Naive thymus-derived CD8-positive, alpha-beta T cell (primary cell): ENCODE measurements at regions of chr12 and their contacts with region 1.

Region 1: DNA sequence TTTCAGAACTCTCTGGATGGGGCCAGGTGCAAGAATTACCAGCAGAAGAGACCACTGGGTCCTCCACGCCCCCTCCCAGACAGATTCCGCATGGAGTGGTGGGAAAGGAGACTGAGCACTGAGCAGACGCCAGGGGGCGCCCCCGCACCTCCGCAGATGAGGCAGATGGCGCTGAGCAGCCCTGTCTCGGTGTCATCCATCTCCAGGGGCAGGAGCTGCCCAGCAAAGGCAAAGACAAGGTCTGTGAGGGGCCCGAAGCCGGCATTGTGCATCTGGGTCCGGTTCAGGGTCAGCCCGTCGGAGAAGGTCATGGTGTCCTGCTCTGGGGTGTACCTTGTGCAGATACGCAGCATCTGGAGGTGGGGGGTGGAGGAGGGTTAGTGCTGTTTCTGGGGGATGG is 6.3 kb upstream of the ITGB7 start:
- DNase-seq: peak; percentile 69 to 90 (median 83)
- ATAC-seq: peak; percentile 72 to 73
- H3K4me3 Mint-ChIP-seq: peak overlapping the region in 2 of 10 donors; percentile 10 to 54
- H3K27ac Mint-ChIP-seq: peak overlapping the region; percentile 52 to 93 (median 80)
- H3K4me1 Mint-ChIP-seq: peaks cover 59 to 83% (median 78%) of the 10 kb centered on the region in 4 donors
- H3K27me3 Mint-ChIP-seq: no peaks in the 10 kb centered on the region

Region 2: DNA sequence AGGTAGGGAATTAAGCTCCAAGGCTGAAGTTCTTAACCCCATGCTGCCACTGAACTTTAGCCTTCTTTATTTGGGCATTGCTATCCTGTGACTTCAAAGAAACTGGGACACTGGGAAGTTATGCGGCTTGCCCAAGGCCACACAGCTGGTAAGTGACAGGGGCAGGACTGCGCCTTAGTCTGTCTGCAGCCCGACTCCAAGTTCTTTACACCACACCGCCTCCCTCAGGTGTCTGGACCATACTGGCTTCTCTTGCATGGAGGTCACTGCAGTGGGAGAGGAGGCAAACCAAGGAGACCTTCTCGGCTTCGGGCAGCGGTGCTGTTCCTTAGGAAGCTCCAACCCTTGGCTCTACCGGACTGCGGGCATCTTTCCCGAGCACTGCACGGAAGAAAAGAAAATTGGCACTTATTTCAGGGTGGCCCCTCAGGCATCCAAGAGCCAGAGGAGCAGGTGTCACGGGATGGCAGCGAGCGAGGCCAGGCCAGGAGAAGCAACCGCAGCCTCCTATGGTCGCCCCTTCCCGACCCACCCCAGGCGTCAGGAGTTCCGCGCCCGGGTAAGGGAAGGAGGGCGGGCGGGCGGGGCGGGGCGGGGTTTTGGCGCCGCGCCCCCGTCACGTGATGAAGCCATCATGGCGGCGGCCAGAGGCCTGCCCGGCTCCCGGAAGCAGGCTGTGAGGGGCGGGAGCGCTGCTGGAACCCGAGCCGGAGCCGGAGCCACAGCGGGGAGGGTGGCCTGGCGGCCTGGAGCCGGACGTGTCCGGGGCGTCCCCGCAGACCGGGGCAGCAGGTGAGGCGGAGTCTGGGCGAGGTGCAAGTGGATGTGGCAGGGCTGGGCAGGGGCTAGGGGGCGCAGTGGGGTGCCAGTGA is 38.4 kb after region 1 on chr12:
- POLR2A ChIA-PET with region 1: interaction called, 94 read pairs
- DNase-seq: peak; percentile 50 to 83 (median 72)
- ATAC-seq: peak; percentile 87 to 89
- H3K4me3 Mint-ChIP-seq: peak overlapping the region; percentile 92 to 99 (median 97)
- H3K27ac Mint-ChIP-seq: peak overlapping the region; percentile 90 to 99 (median 96)
- H3K4me1 Mint-ChIP-seq: peaks cover 27 to 52% (median 50%) of the 10 kb centered on the region in 4 donors
- H3K27me3 Mint-ChIP-seq: no peaks in the 10 kb centered on the region

Region 3: DNA sequence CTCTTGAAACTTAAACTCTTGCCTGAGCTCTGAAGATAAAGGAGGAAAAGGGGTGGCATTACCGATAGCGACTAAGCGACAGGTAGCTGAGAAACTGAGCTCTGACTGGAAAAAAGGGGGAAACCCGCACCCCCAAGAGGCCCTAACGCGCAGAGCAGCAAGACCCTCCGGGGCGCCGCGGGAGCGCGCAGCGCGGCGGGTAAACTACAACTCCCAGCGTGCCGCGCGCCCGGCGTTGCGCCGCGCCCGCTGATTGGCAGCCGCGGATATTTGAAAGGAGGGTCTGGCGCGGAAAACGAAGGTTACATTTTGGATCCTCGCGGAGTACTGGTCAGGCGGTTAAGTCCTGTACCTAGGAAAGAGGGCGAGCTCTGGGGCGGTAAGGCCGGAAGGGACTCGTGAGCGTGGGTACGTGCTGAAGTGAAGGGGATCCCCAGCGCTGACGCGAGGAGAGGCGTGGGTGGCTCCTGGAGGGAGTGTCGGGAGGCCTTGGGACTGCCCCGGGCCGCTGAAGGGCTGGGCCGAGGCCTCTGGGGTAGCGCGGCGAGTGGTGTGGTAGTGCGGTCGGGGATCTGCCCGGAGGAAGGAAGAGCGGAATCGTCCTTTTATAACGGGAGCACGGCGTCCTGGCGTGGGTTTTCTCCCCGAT is 54.8 kb after region 1 on chr12 and contains the start of gene ESPL1:
- POLR2A ChIA-PET with region 1: interaction called, 53 read pairs
- DNase-seq: peak; percentile 77 to 91 (median 85)
- ATAC-seq: peak; percentile 90 to 95
- H3K4me3 Mint-ChIP-seq: peak within 1 kb of the TSS; percentile 92 to 100 (median 96)
- H3K27ac Mint-ChIP-seq: peak within 1 kb of the TSS; percentile 88 to 96 (median 94)
- H3K4me1 Mint-ChIP-seq: peaks cover 12 to 22% (median 20%) of the 10 kb centered on the region in 4 donors
- H3K27me3 Mint-ChIP-seq: peaks cover 0 to 4% (median 0%) of the 10 kb centered on the region in 5 donors
- polyA plus RNA-seq, gene ESPL1: not detected